Tibial artery (tissue), 4 donors: ENCODE measurements at regions of chr15 and their contacts with region 1.

Region 1: DNA sequence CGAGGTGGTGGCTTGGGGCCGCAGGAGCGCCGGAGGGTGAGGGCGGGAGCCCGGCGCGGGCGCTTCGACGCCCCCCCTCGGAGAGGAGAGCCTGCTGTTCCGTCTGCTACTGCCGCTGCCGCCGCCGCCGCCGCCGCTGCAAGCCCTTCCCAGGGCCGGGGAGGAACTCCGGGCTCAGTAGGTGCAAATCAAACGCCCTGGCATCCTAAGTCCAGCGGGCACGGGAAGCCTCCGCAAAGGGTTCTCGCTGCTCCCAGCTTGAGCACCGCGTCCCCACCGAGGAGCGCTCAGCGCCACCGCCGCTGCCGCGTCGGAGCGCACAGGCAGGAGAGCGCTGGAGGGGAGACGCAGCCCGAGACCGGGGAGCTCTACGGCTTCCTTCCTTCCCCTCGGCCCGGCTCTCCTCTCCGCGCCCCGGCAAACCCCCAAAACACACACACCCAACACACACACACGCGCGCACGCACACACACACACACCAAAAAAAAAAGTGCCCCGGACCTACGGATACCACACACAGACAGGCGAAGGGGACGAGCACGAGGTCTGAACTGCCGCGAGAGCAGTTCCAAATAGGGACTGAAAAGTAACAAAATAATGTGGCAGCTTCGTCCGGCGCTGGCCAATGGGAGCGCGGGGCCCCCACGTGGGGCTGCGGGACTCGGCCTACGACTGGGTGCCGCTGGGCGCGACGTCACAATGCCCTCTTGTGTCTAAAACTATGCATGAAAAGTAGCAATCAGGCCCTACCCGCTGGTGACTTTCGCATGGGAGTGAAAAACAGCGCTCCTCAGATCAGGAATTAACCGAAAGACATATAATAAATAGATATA is at the start of gene TLE3:
- DNase-seq: peak; percentile 100
- H3K4me3 ChIP-seq: peak within 1 kb of the TSS; percentile 78 to 95
- H3K27ac ChIP-seq: peak within 1 kb of the TSS; percentile 95 to 97
- H3K4me1 ChIP-seq: peaks cover 4 to 64% (median 54%) of the 10 kb centered on the region in 4 donors
- H3K27me3 ChIP-seq: no peaks in the 10 kb centered on the region
- CTCF ChIP-seq: peak; percentile 41 to 46

Region 2: GRCh38 chr15:69576035-69576526 is 521.5 kb before region 1 on chr15:
- intact Hi-C with region 1: loop called (anchors 10 kb)
- DNase-seq: peak; percentile 45 to 78
- H3K4me3 ChIP-seq: no peak overlapping the region
- H3K27ac ChIP-seq: no peak overlapping the region
- H3K4me1 ChIP-seq: peaks cover 0 to 22% (median 11%) of the 10 kb centered on the region in 4 donors
- H3K27me3 ChIP-seq: no peaks in the 10 kb centered on the region
- CTCF ChIP-seq: peak; percentile 82 to 87

Region 3: DNA sequence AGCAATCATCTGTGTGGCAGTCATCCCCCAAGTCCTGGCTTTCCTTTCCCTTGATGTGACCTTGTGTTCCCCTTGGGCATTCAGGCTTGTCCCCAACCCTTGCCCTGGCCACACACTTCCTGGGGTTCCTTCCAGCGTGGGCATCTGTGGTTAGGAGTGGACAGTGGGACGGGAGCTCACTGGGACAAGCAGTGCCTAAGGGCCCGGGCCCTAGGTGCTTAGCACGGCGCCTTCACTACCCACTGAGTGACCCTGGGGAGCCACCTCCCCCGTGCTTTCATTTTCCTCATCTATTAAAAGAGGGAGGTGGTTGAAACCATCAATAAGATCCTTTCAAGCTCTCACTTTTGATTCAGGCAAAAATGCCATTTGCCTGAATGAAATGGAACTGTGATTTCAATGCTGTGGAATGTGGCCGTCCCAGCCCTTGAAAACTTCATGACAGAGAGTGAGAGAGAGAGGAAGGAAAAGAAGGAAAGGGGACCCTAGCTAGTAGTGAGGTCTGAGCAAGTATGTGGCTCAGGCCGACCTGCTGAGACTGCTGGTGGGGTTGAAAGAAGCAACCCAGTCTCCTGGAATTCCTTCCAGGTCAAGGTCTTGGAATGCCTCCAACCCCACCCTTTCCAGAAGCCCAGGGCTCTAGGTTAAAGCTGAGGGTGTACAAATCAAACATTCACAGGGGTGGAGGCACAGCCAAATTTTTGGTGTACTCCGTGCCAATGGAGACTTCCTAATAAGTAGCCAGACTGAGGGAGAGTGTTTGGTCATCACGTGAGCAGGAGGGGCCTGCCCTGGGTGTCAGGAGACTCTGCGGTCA is 302.7 kb before region 1 on chr15:
- intact Hi-C with region 1: loop called (anchors 10 kb)
- DNase-seq: peak; percentile 85 to 89
- H3K4me3 ChIP-seq: peak overlapping the region in 1 of 2 donors; percentile 13
- H3K27ac ChIP-seq: peak overlapping the region; percentile 83 to 92
- H3K4me1 ChIP-seq: peaks cover 0 to 41% (median 27%) of the 10 kb centered on the region in 4 donors
- H3K27me3 ChIP-seq: no peaks in the 10 kb centered on the region
- CTCF ChIP-seq: no peak

Region 4: GRCh38 chr15:70156671-70157271 is 59.2 kb after region 1 on chr15:
- intact Hi-C with region 1: loop called (anchors 5 kb)
- DNase-seq: peak; percentile 58 to 90
- H3K4me3 ChIP-seq: no peak overlapping the region
- H3K27ac ChIP-seq: peak overlapping the region; percentile 31 to 35
- H3K4me1 ChIP-seq: peaks cover 0 to 59% (median 33%) of the 10 kb centered on the region in 4 donors
- H3K27me3 ChIP-seq: no peaks in the 10 kb centered on the region
- CTCF ChIP-seq: no peak

Region 5: GRCh38 chr15:70271422-70272088 is 174.0 kb after region 1 on chr15:
- intact Hi-C with region 1: loop called (anchors 5 kb)
- DNase-seq: peak; percentile 82 to 85
- H3K4me3 ChIP-seq: no peak overlapping the region
- H3K27ac ChIP-seq: peak overlapping the region; percentile 78 to 88
- H3K4me1 ChIP-seq: peaks cover 0 to 43% (median 41%) of the 10 kb centered on the region in 4 donors
- H3K27me3 ChIP-seq: no peaks in the 10 kb centered on the region
- CTCF ChIP-seq: no peak